ENCODE measurements at regions of chr3 and their contacts with region 1.

Region 1: DNA sequence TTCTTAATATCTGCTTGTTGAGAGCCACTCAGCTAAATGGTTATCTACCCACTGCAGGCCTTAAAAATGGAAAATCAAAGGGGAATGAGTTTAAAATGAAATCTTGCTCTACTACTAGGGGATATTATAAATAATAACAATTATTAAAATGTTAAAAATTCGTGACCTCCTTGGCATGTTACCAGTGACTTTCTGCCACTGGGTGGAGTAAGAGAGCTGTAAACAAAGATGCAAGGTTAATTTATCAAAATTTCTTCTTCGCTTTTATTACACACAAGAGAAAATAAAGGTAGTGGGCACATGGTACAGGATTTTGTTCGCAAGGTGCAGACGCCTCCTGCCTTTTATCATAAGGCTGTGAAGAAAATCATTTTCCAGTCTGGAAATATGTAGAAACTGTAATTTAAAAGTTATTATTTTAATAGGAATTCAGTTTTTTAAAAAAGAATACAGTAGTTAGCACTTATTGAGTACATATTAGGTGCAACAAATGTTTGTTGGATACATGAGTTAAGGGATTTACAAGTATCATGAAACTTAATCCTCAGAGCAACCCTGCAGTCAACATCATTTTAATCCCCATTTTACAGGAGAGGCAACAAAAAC is 272.6 kb downstream of the SUCLG2 start:
- H3K4me3 Mint-ChIP-seq: no peak overlapping the region
- H3K27ac Mint-ChIP-seq: no peak overlapping the region
- H3K4me1 Mint-ChIP-seq: no peaks in the 10 kb centered on the region
- H3K27me3 Mint-ChIP-seq: peaks cover 2% of the 10 kb centered on the region

Region 2: DNA sequence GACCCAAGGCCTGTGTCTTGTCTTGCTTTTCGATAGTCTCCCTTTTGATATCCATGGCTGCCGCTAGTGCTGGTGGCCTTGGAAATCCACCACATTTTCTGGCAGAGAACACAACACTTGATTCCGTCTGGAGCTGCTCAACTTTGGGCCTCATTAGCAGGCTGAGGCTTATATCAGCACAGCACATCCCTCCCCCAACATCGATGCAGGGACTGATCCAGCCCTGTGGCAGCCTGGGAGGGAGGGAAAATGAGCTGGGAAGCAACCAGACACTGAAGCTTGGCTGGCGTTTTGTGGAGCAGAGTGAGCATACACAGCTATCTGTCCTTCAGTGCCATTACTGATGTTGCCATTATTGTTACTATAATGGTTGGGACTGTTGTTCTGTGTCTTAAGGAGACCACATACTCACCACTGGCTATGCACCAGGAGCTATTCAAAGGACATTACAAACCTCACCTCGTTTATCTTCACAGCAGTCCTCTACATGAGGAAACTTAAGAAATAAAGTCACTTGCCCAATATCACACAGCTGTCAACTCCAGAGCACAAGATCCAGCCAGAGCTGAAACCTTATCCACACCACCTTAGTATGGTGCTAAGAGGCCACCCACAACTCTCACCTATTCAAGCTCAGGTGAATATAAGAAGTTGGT is 169.7 kb after region 1 on chr3:
- intact Hi-C with region 1: no loop called
- H3K4me3 Mint-ChIP-seq: no peak overlapping the region
- H3K27ac Mint-ChIP-seq: no peak overlapping the region
- H3K4me1 Mint-ChIP-seq: no peaks in the 10 kb centered on the region
- H3K27me3 Mint-ChIP-seq: no peaks in the 10 kb centered on the region

Region 3: GRCh38 chr3:67790043-67790442 is 408.3 kb after region 1 on chr3:
- intact Hi-C with region 1: loop called (anchors 2 kb)
- H3K4me3 Mint-ChIP-seq: no peak overlapping the region
- H3K27ac Mint-ChIP-seq: no peak overlapping the region
- H3K4me1 Mint-ChIP-seq: no peaks in the 10 kb centered on the region
- H3K27me3 Mint-ChIP-seq: no peaks in the 10 kb centered on the region

Measured in dendritic cell treated with granulocyte-macrophage colony-stimulating factor and Interleukin-4, amounts not matched to agents 40 ng/mL and 50 ng/mL, for 4 days (primary cell).